ENCODE measurements at regions of chr21 and their contacts with region 1.

Region 1: DNA sequence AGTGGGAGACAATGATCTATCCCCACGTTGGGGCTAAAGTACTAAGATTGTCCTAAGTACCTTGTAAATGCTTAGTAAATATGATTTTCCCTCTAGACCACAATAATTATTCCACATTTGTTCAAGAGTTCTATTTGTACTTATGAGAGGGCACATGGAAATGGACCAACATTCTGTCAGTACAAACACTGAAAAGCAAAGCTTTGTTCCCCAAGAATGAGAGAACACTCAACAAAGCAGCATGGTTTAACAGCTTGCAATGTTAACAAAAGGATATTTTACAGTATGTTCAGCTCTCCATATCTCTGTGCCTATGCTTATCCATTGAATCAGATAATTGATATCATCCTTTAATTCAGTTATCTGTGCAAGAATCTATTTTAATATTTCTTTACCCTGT is 35.4 kb downstream of the RBM11 start:
- DNase-seq: no peak
- H3K4me3 Mint-ChIP-seq: no peak overlapping the region
- H3K27ac Mint-ChIP-seq: no peak overlapping the region
- H3K4me1 Mint-ChIP-seq: peaks cover 6% of the 10 kb centered on the region
- H3K27me3 Mint-ChIP-seq: no peaks in the 10 kb centered on the region
- CTCF ChIP-seq: no peak

Region 2: GRCh38 chr21:14241297-14241696 is 10.0 kb before region 1 on chr21:
- CTCF ChIA-PET with region 1: interaction called, 14 read pairs
- POLR2A ChIA-PET with region 1: no interaction called
- intact Hi-C with region 1: no loop called
- DNase-seq: no peak
- H3K4me3 Mint-ChIP-seq: no peak overlapping the region
- H3K27ac Mint-ChIP-seq: no peak overlapping the region
- H3K4me1 Mint-ChIP-seq: no peaks in the 10 kb centered on the region
- H3K27me3 Mint-ChIP-seq: no peaks in the 10 kb centered on the region
- CTCF ChIP-seq: no peak

Region 3: DNA sequence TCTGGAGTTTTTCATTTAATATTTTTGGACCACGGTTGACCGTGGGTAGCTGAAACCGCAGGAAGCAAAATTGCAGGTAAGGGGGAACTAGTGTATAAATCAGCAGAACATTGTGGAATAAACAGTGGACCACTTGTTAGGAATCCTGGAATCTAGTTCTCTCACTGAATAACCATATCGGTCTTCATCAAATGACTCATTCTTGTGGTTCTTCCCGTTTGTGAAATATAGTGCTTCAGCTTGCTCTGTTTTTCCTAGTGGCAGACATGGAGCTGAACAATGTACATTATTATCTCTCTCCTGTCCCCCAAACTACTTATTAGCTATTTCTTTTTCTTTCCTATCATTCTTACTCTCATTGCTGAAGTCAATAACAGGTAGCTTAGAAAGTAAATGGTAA is 69.7 kb after region 1 on chr21:
- CTCF ChIA-PET with region 1: no interaction called
- POLR2A ChIA-PET with region 1: no interaction called
- intact Hi-C with region 1: no loop called
- DNase-seq: peak; percentile 61
- H3K4me3 Mint-ChIP-seq: no peak overlapping the region
- H3K27ac Mint-ChIP-seq: no peak overlapping the region
- H3K4me1 Mint-ChIP-seq: peaks cover 11% of the 10 kb centered on the region
- H3K27me3 Mint-ChIP-seq: no peaks in the 10 kb centered on the region
- CTCF ChIP-seq: no peak

Measured in MCF 10A (cell line).